ENCODE measurements at regions of chr2 and their contacts with region 1.

Region 1: GRCh38 chr2:241009601-241010530 is 11.4 kb downstream of the SNED1 start:
- DNase-seq: peak in 8 of 9 donors; percentile 31 to 78 (median 68)
- ATAC-seq: peak; percentile 80
- H3K4me3 ChIP-seq: peak overlapping the region; percentile 51
- H3K4me3 Mint-ChIP-seq: peak overlapping the region; percentile 37 to 95 (median 74)
- H3K27ac ChIP-seq: peak overlapping the region; percentile 64
- H3K27ac Mint-ChIP-seq: peak overlapping the region; percentile 80 to 94 (median 90)
- H3K4me1 ChIP-seq: peaks cover 3 to 36% of the 10 kb centered on the region in 2 donors
- H3K4me1 Mint-ChIP-seq: peaks cover 16 to 47% (median 40%) of the 10 kb centered on the region in 7 donors
- H3K27me3 ChIP-seq: no peaks in the 10 kb centered on the region
- H3K27me3 Mint-ChIP-seq: peaks cover 0 to 26% (median 0%) of the 10 kb centered on the region in 5 donors

Region 2: DNA sequence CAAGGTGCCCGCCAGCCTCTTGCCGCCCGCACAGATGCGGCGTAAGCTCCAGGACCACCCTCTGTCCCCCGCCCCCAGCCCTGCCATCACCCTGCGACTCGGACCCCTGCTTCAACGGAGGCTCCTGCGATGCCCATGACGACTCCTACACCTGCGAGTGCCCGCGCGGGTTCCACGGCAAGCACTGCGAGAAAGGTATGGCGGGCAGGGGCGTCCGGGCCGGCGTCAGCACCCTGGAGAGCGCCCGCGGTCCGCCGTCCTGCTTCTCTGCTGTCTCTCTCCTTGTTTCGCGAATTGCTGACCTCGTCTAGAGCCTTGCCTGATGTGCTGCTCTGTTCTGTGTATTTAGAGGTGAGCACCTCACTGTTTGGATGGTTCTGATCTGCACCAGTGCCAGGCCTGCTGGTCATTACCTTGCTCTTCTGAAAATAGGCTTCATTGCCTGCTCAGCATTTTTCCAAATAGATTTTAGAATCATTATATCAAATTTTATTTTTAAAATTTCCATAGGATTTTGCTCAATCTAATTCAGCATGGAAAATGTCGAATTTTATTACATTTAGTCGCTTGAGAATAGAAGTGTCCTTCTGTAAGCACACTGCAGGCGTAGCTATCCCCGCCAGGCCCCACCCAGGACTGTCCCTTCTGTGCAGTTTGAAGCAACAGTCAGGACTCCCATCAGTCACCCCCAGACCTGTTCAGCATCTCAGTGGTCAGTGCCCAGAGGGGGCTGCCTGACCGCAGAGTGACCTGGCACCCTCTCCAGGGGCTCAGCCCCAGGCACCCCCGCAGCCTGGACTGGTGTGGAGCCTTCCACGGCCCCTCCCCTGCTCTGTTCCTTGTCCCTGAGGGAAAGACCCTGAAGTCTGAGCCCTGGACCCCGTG is 40.1 kb after region 1 on chr2:
- CTCF ChIA-PET with region 1: no interaction called
- POLR2A ChIA-PET with region 1: no interaction called
- intact Hi-C with region 1: loop called in 1 of 2 experiments (anchors 5 kb)
- DNase-seq: no peak
- ATAC-seq: no peak
- H3K4me3 ChIP-seq: no peak overlapping the region
- H3K4me3 Mint-ChIP-seq: no peak overlapping the region
- H3K27ac ChIP-seq: no peak overlapping the region
- H3K27ac Mint-ChIP-seq: no peak overlapping the region
- H3K4me1 ChIP-seq: no peaks in the 10 kb centered on the region
- H3K4me1 Mint-ChIP-seq: no peaks in the 10 kb centered on the region
- H3K27me3 ChIP-seq: no peaks in the 10 kb centered on the region
- H3K27me3 Mint-ChIP-seq: peaks cover 0 to 8% (median 0%) of the 10 kb centered on the region in 5 donors

Region 3: DNA sequence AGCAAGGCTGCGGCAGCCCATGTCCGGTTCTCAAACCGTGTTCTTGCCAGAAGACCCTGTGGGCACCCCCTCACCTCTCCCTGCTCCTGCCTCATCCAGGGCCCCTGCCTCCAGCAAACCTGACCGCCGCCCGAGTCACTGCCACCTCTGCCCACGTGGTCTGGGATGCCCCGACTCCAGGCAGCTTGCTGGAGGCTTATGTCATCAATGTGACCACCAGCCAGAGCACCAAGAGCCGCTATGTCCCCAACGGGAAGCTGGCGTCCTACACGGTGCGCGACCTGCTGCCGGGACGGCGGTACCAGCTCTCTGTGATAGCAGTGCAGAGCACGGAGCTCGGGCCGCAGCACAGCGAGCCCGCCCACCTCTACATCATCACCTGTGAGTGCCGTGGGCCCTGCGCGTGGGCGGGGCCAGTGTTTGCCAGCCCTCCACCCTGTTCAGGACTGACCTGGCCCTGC is 60.0 kb after region 1 on chr2:
- CTCF ChIA-PET with region 1: no interaction called
- POLR2A ChIA-PET with region 1: no interaction called
- intact Hi-C with region 1: loop called in 1 of 2 experiments (anchors 10 kb)
- DNase-seq: no peak
- ATAC-seq: no peak
- H3K4me3 ChIP-seq: no peak overlapping the region
- H3K4me3 Mint-ChIP-seq: no peak overlapping the region
- H3K27ac ChIP-seq: no peak overlapping the region
- H3K27ac Mint-ChIP-seq: no peak overlapping the region
- H3K4me1 ChIP-seq: no peaks in the 10 kb centered on the region
- H3K4me1 Mint-ChIP-seq: peaks cover 0 to 4% (median 0%) of the 10 kb centered on the region in 7 donors
- H3K27me3 ChIP-seq: no peaks in the 10 kb centered on the region
- H3K27me3 Mint-ChIP-seq: no peaks in the 10 kb centered on the region

Region 4: DNA sequence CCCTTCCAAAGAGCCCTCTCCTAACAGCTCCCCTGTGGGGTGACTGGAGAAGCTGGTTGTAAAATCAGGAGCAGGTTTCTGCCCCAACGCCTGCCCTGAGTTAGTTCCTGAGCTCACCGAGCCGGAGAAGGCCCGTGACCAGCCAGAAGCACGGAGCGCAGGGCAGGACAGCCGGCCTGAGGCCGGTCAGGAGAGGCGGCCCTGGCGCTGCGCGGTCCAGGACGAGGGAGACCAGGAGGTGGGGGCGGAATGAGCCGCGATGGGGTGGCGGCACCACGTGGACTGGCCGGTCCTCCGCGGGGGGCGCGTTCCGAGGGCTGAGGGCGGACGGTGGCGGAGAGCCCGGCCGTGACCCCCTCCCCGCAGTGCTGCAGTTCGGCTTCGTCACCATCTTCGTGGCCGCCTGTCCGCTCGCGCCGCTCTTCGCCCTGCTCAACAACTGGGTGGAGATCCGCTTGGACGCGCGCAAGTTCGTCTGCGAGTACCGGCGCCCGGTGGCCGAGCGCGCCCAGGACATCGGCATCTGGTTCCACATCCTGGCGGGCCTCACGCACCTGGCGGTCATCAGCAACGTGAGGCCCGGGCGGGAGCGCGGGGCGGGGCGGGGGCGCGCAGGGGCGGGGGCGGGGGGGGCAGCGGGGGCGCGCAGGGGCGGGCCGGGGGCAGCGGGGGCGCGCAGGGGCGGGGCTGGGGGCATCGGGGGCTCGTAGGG is 207.6 kb after region 1 on chr2:
- CTCF ChIA-PET with region 1: no interaction called
- POLR2A ChIA-PET with region 1: no interaction called
- intact Hi-C with region 1: loop called in 1 of 2 experiments (anchors 5 kb)
- DNase-seq: peak in 7 of 9 donors; percentile 10 to 50 (median 36)
- ATAC-seq: peak; percentile 53
- H3K4me3 ChIP-seq: peak overlapping the region; percentile 44
- H3K4me3 Mint-ChIP-seq: peak overlapping the region; percentile 62 to 89 (median 79)
- H3K27ac ChIP-seq: peak overlapping the region; percentile 17
- H3K27ac Mint-ChIP-seq: peak overlapping the region in 6 of 9 donors; percentile 21 to 66 (median 33)
- H3K4me1 ChIP-seq: peaks cover 0 to 6% of the 10 kb centered on the region in 2 donors
- H3K4me1 Mint-ChIP-seq: peaks cover 9 to 15% (median 11%) of the 10 kb centered on the region in 7 donors
- H3K27me3 ChIP-seq: no peaks in the 10 kb centered on the region
- H3K27me3 Mint-ChIP-seq: peaks cover 0 to 21% (median 0%) of the 10 kb centered on the region in 5 donors